ENCODE measurements at regions of chr11 and their contacts with region 1.

Region 1: DNA sequence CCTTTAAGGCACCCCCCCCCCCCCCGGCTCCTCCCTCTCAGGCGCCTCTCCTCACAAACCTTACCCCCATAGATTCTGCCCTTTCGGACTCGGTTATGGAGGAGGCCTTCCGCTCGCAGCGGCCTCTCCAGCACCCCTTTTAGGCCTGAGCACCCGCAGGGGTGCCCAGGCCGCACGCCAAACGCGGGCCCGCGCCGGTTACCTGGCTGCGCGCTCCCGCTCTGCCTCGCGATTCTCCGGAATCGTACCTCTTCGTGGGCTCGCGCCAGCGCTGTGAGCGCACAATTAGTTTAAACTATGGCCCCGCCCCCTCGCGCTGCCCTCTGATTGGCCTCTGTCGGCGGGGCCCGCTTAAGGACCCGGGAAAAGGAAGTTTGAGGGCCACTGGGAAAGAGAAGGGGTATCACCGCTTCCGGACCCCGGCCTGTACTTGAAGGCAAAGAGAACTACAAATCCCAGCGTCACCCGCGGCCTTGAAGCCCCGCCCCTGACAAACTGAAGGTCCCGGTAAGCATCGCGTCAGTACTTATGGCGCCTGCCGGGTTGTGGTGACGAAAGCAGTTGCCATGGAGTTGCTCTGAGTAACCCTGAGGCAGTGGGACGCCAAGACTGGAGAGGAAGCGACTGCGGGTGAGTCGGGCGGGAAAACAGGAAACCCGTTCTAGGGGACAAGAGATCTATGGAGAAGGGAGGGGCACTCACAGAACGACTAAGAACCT is at the starts of genes LRRC51 and NUMA1:
- DNase-seq: peak; percentile 95 to 100
- ATAC-seq: peak; percentile 83 to 95 (median 86)
- H3K4me3 ChIP-seq: peak within 1 kb of the TSS; percentile 84
- H3K4me3 Mint-ChIP-seq: peak within 1 kb of the TSS; percentile 98
- H3K27ac ChIP-seq: peak within 1 kb of the TSS; percentile 92
- H3K27ac Mint-ChIP-seq: peak within 1 kb of the TSS; percentile 99 to 100
- H3K4me1 ChIP-seq: peaks cover 21% of the 10 kb centered on the region
- H3K4me1 Mint-ChIP-seq: peaks cover 36 to 38% of the 10 kb centered on the region in 2 donors
- H3K27me3 ChIP-seq: no peaks in the 10 kb centered on the region
- H3K27me3 Mint-ChIP-seq: no peaks in the 10 kb centered on the region
- CTCF ChIP-seq: no peak
- total RNA-seq, gene LRRC51: 2.0 to 3.1 (median 2.5) TPM
- total RNA-seq, gene NUMA1: 261 to 290 (median 262) TPM

Region 2: DNA sequence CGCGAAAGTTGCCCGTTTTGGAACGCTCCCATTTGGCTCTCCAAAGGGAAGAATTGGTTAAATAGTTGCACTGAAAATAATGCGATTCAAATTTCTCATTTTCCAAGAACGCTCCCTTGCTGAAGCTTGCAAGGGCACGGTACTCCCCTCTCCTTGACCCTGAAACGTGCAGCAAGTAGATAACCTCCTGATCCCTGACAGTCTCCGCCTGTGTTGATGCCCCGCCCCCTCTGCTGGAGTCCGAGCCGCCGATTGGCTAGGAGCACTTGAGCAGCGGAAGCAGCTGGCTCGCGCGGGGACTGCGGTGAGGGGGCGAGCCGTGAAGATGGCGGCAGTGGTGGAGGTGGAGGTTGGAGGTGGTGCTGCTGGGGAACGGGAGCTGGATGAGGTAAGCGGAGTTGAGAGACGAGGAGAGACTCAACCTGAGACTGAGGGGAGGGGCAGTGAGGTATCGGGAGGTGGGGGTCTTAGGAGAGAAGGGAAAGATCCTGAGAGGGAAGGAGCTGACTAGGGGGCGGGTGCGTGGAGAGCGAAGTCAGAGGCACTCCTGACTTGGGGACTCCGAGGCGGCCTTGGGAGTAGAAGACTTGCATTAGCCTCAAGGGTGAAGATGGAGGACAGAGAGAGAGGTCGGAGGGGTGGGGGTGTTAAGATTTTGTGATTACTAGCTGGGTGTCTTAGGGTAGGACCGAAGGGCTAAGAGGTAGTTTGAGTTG is 151.5 kb before region 1 on chr11 and contains the start of gene RNF121:
- intact Hi-C with region 1: loop called (anchors 1 kb)
- DNase-seq: peak; percentile 96 to 97
- ATAC-seq: peak; percentile 91 to 96 (median 93)
- H3K4me3 ChIP-seq: peak within 1 kb of the TSS; percentile 73
- H3K4me3 Mint-ChIP-seq: peak within 1 kb of the TSS; percentile 99
- H3K27ac ChIP-seq: peak within 1 kb of the TSS; percentile 83
- H3K27ac Mint-ChIP-seq: peak within 1 kb of the TSS; percentile 92 to 98
- H3K4me1 ChIP-seq: peaks cover 18% of the 10 kb centered on the region
- H3K4me1 Mint-ChIP-seq: peaks cover 37 to 47% of the 10 kb centered on the region in 2 donors
- H3K27me3 ChIP-seq: no peaks in the 10 kb centered on the region
- H3K27me3 Mint-ChIP-seq: no peaks in the 10 kb centered on the region
- CTCF ChIP-seq: no peak
- total RNA-seq, gene RNF121: 22.7 to 28.2 (median 22.9) TPM

Region 3: GRCh38 chr11:72040726-72041441 is 39.5 kb before region 1 on chr11:
- intact Hi-C with region 1: loop called (anchors 1 kb)
- DNase-seq: peak; percentile 61 to 92
- ATAC-seq: peak; percentile 46 to 69 (median 51)
- H3K4me3 ChIP-seq: peak overlapping the region; percentile 87
- H3K4me3 Mint-ChIP-seq: no peak overlapping the region
- H3K27ac ChIP-seq: peak overlapping the region; percentile 88
- H3K27ac Mint-ChIP-seq: no peak overlapping the region
- H3K4me1 ChIP-seq: peaks cover 60% of the 10 kb centered on the region
- H3K4me1 Mint-ChIP-seq: peaks cover 12 to 35% of the 10 kb centered on the region in 2 donors
- H3K27me3 ChIP-seq: no peaks in the 10 kb centered on the region
- H3K27me3 Mint-ChIP-seq: no peaks in the 10 kb centered on the region
- CTCF ChIP-seq: no peak

Region 4: GRCh38 chr11:72091005-72091691 is 10.7 kb after region 1 on chr11:
- intact Hi-C with region 1: loop called (anchors 1 kb)
- DNase-seq: peak; percentile 56 to 85
- ATAC-seq: peak; percentile 92 to 100 (median 97)
- H3K4me3 ChIP-seq: no peak overlapping the region
- H3K4me3 Mint-ChIP-seq: no peak overlapping the region
- H3K27ac ChIP-seq: no peak overlapping the region
- H3K27ac Mint-ChIP-seq: peak overlapping the region in 1 of 2 donors; percentile 42
- H3K4me1 ChIP-seq: no peaks in the 10 kb centered on the region
- H3K4me1 Mint-ChIP-seq: peaks cover 0 to 15% of the 10 kb centered on the region in 2 donors
- H3K27me3 ChIP-seq: no peaks in the 10 kb centered on the region
- H3K27me3 Mint-ChIP-seq: no peaks in the 10 kb centered on the region
- CTCF ChIP-seq: peak; percentile 84

Region 5: GRCh38 chr11:72102946-72103753 is 22.7 kb after region 1 on chr11 and contains the start of gene LAMTOR1:
- intact Hi-C with region 1: loop called (anchors 1 kb)
- DNase-seq: peak; percentile 97 to 99
- ATAC-seq: peak; percentile 95 to 98 (median 98)
- H3K4me3 ChIP-seq: peak within 1 kb of the TSS; percentile 84
- H3K4me3 Mint-ChIP-seq: peak within 1 kb of the TSS; percentile 94
- H3K27ac ChIP-seq: peak within 1 kb of the TSS; percentile 90
- H3K27ac Mint-ChIP-seq: peak within 1 kb of the TSS; percentile 89 to 91
- H3K4me1 ChIP-seq: peaks cover 31% of the 10 kb centered on the region
- H3K4me1 Mint-ChIP-seq: peaks cover 43 to 45% of the 10 kb centered on the region in 2 donors
- H3K27me3 ChIP-seq: no peaks in the 10 kb centered on the region
- H3K27me3 Mint-ChIP-seq: no peaks in the 10 kb centered on the region
- CTCF ChIP-seq: peak; percentile 45
- total RNA-seq, gene LAMTOR1: 55.5 to 62.9 (median 56.2) TPM

Region 6: GRCh38 chr11:72112321-72113219 is 32.2 kb after region 1 on chr11 and contains the start of gene ANAPC15:
- intact Hi-C with region 1: loop called (anchors 1 kb)
- DNase-seq: peak; percentile 95 to 100
- ATAC-seq: peak; percentile 88 to 95 (median 88)
- H3K4me3 ChIP-seq: peak within 1 kb of the TSS; percentile 69
- H3K4me3 Mint-ChIP-seq: peak within 1 kb of the TSS; percentile 94
- H3K27ac ChIP-seq: peak within 1 kb of the TSS; percentile 90
- H3K27ac Mint-ChIP-seq: peak within 1 kb of the TSS; percentile 95 to 96
- H3K4me1 ChIP-seq: peaks cover 19% of the 10 kb centered on the region
- H3K4me1 Mint-ChIP-seq: peaks cover 20 to 24% of the 10 kb centered on the region in 2 donors
- H3K27me3 ChIP-seq: no peaks in the 10 kb centered on the region
- H3K27me3 Mint-ChIP-seq: peaks cover 7 to 23% of the 10 kb centered on the region in 2 donors
- CTCF ChIP-seq: no peak
- total RNA-seq, gene ANAPC15: 22.0 to 38.3 (median 29.7) TPM

Region 7: DNA sequence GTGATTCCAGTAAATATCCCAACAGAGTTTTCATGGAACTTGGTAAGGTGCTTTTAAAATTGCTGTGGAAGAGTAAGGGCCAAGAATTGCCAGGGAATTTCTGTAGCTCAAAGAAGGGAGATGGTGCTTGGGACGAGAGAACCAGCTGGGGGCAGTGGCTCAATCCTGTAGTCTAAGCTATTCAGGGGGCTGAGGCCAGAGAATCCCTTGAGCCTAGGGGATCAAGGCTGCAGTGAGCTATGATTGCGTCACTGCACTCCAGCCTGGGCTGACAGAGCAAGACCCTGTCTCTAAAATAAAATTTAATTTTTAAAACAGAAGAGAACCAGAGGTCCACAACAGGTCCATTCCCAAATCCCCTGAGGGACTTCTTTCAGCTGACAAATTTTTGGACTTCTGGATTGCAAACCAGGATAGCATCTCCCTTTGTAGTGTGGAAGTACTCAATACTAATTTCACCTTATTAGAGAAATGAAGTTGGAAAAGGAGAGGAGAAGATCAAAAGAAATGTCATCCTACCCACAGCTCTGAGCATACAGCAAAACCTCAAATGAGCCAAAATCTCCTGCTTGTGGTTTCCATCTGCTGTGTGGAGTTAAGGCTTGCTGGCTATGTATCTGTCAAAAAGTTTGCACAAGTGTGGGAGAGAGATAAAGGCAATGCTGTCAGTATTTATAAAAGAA is 413.2 kb after region 1 on chr11:
- intact Hi-C with region 1: no loop called
- DNase-seq: no peak
- ATAC-seq: no peak
- H3K4me3 ChIP-seq: no peak overlapping the region
- H3K4me3 Mint-ChIP-seq: no peak overlapping the region
- H3K27ac ChIP-seq: no peak overlapping the region
- H3K27ac Mint-ChIP-seq: no peak overlapping the region
- H3K4me1 ChIP-seq: no peaks in the 10 kb centered on the region
- H3K4me1 Mint-ChIP-seq: peaks cover 9 to 10% of the 10 kb centered on the region in 2 donors
- H3K27me3 ChIP-seq: no peaks in the 10 kb centered on the region
- H3K27me3 Mint-ChIP-seq: peaks cover 0 to 2% of the 10 kb centered on the region in 2 donors
- CTCF ChIP-seq: no peak

Measured in natural killer cell (primary cell).